B cell (primary cell): ENCODE measurements at regions of chr3 and their contacts with region 1.

Region 1: DNA sequence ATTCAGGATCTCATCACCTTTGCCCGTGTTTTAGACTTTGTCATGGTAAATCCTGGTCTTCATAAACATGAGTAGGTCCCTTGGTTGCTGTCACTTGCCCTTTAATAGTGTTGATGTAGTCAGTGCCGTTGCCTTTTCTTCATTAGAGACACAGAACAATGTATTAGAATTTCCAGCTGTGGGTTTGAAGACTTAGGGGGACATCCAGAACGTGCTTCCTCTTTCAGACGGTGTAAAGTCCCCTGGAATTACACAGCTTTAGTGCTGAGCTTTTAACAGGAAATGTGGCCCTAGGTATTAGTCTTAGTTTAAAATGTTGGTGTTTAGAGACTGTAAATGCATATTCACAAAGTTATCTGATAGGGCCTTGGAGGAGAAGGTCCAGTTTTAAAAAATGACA is 8.8 kb upstream of the LRCH3 start:
- DNase-seq: peak; percentile 69
- ATAC-seq: peak; percentile 83
- H3K4me3 ChIP-seq: no peak overlapping the region
- H3K4me3 Mint-ChIP-seq: peak overlapping the region; percentile 10
- H3K27ac ChIP-seq: peak overlapping the region; percentile 8 to 72
- H3K27ac Mint-ChIP-seq: peak overlapping the region; percentile 68
- H3K4me1 ChIP-seq: peaks cover 20% of the 10 kb centered on the region in 2 donors
- H3K4me1 Mint-ChIP-seq: peaks cover 31% of the 10 kb centered on the region
- H3K27me3 ChIP-seq: no peaks in the 10 kb centered on the region
- H3K27me3 Mint-ChIP-seq: no peaks in the 10 kb centered on the region
- CTCF ChIP-seq: no peak

Region 2: DNA sequence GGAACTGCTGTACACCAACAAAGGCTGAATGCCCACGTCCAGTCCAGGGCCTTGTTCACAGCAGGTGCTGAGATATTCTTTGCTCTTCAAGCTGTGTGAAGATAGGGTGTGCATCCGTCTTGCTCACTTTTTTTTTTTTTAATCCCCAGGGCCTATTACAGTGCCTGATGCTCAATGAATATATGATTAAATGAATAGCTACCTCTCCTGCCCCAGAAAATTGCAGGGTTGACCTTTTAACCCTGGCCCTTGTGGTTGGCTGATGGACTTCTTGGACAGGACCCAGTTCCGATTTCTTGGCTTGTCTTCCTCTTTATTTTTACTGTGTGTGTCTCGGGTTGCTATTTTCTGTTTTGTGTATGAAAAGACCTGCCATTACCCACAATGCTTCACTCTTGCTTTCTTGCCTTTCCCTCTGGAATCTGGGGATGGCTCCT is 35.4 kb before region 1 on chr3:
- CTCF ChIA-PET with region 1: no interaction called
- POLR2A ChIA-PET with region 1: no interaction called
- intact Hi-C with region 1: no loop called
- DNase-seq: no peak
- ATAC-seq: no peak
- H3K4me3 ChIP-seq: no peak overlapping the region
- H3K4me3 Mint-ChIP-seq: no peak overlapping the region
- H3K27ac ChIP-seq: no peak overlapping the region
- H3K27ac Mint-ChIP-seq: no peak overlapping the region
- H3K4me1 ChIP-seq: peaks cover 13 to 21% of the 10 kb centered on the region in 2 donors
- H3K4me1 Mint-ChIP-seq: peaks cover 26% of the 10 kb centered on the region
- H3K27me3 ChIP-seq: no peaks in the 10 kb centered on the region
- H3K27me3 Mint-ChIP-seq: no peaks in the 10 kb centered on the region
- CTCF ChIP-seq: no peak

Region 3: DNA sequence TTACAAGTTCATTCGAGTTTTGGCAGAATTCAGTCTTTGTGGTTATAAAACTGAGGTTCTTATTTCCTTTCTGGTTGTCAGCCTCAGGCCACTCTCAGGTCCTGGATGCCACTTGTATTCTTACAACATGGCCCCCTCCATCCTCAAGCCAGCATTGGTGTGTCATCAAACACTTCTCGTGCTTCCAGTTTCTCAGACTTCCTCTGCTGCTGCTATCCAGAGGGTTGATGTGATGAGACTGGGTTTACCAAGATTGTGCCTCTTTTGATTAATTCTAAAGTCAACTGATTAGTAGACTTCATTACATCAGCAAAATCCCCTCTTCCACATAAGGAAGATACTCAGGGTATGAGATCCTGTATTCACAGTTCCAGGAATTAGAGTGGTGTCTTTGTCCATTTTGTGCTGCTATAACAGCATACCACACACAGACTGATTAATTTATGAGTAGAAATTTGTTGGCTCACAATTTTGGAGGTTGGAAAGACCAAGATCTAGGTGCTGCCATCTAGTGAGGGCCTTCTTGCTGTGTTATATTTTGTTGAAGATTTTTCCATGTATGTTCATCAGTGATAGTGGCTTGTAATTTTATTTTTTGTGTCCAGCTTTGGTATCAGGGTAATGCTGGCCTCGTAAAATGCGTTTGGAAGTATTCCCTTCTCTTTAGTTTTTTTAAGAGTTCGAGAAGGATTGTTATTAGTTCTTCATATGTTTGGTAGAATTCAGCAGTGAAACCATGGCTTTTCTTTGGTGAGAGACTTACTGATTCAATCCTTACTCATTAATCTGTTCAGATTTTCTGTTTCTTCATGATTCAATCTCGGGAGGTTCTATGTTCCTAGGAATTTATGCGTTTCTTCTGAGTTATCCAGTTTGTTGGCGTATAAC is 19.9 kb after region 1 on chr3:
- CTCF ChIA-PET with region 1: interaction called, 12 read pairs
- POLR2A ChIA-PET with region 1: interaction called, 4 read pairs
- intact Hi-C with region 1: no loop called
- DNase-seq: peak; percentile 66
- ATAC-seq: peak; percentile 54
- H3K4me3 ChIP-seq: no peak overlapping the region
- H3K4me3 Mint-ChIP-seq: no peak overlapping the region
- H3K27ac ChIP-seq: peak overlapping the region in 1 of 2 donors; percentile 27
- H3K27ac Mint-ChIP-seq: peak overlapping the region; percentile 12
- H3K4me1 ChIP-seq: peaks cover 15 to 28% of the 10 kb centered on the region in 2 donors
- H3K4me1 Mint-ChIP-seq: peaks cover 51% of the 10 kb centered on the region
- H3K27me3 ChIP-seq: no peaks in the 10 kb centered on the region
- H3K27me3 Mint-ChIP-seq: no peaks in the 10 kb centered on the region
- CTCF ChIP-seq: peak; percentile 80

Region 4: DNA sequence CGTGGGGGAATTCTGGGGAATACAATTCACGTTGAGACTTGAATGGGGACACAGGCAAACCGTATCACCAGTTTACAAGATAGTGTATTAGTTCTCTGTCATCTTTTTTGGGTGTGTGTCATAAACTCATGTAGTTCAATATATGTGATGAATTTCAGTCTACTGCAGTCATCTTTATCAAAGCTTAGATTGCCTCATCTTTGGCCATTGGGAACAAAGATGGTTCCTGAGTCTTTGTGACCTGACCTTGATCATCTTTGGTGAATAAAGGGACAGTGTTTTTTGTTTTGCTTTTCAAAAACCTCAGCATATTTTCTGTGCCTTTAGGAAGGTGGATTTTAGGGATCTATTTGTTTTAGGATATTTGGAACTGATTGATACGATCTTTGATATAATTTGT is 32.1 kb after region 1 on chr3:
- CTCF ChIA-PET with region 1: no interaction called
- POLR2A ChIA-PET with region 1: no interaction called
- intact Hi-C with region 1: no loop called
- DNase-seq: no peak
- ATAC-seq: no peak
- H3K4me3 ChIP-seq: no peak overlapping the region
- H3K4me3 Mint-ChIP-seq: no peak overlapping the region
- H3K27ac ChIP-seq: no peak overlapping the region
- H3K27ac Mint-ChIP-seq: no peak overlapping the region
- H3K4me1 ChIP-seq: peaks cover 4 to 5% of the 10 kb centered on the region in 2 donors
- H3K4me1 Mint-ChIP-seq: peaks cover 20% of the 10 kb centered on the region
- H3K27me3 ChIP-seq: no peaks in the 10 kb centered on the region
- H3K27me3 Mint-ChIP-seq: no peaks in the 10 kb centered on the region
- CTCF ChIP-seq: no peak